ENCODE measurements at regions of chr12 and their contacts with region 1.

Region 1: GRCh38 chr12:113980537-113981337 is 14.6 kb upstream of the RBM19 start:
- DNase-seq: peak in 1 of 2 donors; percentile 25
- ATAC-seq: peak; percentile 70

Region 2: GRCh38 chr12:114508529-114509129 is 527.9 kb after region 1 on chr12:
- intact Hi-C with region 1: loop called in 1 of 2 experiments (anchors 2 kb)
- DNase-seq: peak; percentile 29 to 72
- ATAC-seq: peak; percentile 52

Measured in left colon (tissue), 2 donors.